Caco-2 (cell line): ENCODE measurements at regions of chr2 and their contacts with region 1.

Region 1: DNA sequence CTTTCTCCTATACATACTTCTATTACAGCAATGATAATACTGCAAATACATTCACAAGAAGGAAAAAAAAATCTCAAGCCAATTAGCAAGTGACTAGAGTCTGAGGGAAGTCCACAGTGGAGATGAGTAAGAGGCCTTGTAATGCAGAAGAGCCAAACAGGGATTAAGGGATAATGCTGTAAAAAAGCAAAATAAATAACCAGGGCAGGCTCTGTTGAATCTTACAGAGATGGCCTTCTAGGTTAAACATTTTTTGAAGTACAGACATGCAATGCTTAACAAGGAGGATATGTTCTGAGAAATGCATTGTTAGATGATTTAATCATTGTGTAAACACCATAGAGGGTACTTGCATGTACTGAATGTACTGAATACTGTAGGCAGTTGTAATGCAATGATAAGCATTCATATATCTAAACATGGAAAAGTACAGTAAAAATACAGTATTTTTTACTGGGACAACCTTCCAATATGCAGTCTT is 122.1 kb upstream of the RMDN2 start:
- DNase-seq: peak in 1 of 2 experiments; percentile 70
- H3K4me3 ChIP-seq: no peak overlapping the region
- H3K4me3 Mint-ChIP-seq: peak overlapping the region; percentile 19
- H3K27ac Mint-ChIP-seq: peak overlapping the region; percentile 77
- H3K4me1 ChIP-seq: peaks cover 47% of the 10 kb centered on the region
- H3K4me1 Mint-ChIP-seq: peaks cover 38% of the 10 kb centered on the region
- H3K27me3 ChIP-seq: no peaks in the 10 kb centered on the region
- H3K27me3 Mint-ChIP-seq: no peaks in the 10 kb centered on the region
- CTCF ChIP-seq: no peak

Region 2: GRCh38 chr2:37059841-37060240 is 743.1 kb before region 1 on chr2:
- CTCF ChIA-PET with region 1: no interaction called
- POLR2A ChIA-PET with region 1: no interaction called
- intact Hi-C with region 1: no loop called
- DNase-seq: no peak
- H3K4me3 ChIP-seq: no peak overlapping the region
- H3K4me3 Mint-ChIP-seq: no peak overlapping the region
- H3K27ac Mint-ChIP-seq: no peak overlapping the region
- H3K4me1 ChIP-seq: no peaks in the 10 kb centered on the region
- H3K4me1 Mint-ChIP-seq: no peaks in the 10 kb centered on the region
- H3K27me3 ChIP-seq: no peaks in the 10 kb centered on the region
- H3K27me3 Mint-ChIP-seq: no peaks in the 10 kb centered on the region
- CTCF ChIP-seq: no peak

Region 3: DNA sequence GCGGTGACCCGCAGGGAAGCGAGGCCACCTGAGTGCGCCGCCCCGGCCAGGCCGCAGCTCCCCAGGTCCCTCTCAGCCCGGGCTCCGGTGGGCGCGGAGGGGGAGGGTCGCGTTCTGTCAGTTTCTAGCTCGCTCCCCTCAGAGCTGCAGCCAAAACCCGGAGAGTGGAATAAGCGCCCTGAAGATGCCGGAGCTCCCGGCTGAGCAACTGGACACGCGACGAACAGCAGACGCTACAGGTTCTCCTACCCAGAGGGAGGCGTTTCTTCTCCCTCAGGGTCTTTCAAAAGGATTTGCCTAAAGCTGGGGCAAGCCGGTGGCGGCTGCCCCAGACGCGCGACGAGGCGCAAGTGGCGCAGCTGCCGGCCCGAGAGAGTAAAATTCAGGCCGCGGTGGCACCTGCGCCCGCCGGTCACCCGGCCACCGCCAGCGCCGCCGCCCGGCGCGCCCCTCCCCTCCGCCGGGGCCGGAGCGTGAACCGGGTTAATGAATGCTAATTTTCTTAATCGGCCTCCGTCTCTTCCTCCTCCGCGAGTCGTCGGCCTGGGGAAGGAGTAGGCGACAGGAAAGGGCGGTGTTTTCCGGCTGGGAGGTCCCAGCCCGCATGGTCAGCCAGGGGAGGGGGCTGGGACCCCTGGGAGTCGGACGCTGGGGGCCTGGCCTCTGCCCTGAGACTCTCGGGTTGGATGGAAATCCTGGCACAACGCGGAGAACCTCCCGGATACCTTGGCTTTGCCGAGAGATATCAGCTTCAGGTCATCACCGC is 130.7 kb before region 1 on chr2:
- CTCF ChIA-PET with region 1: no interaction called
- POLR2A ChIA-PET with region 1: no interaction called
- intact Hi-C with region 1: loop called (anchors 2 kb)
- DNase-seq: peak; percentile 94 to 95
- H3K4me3 ChIP-seq: peak overlapping the region; percentile 98
- H3K4me3 Mint-ChIP-seq: peak overlapping the region; percentile 73
- H3K27ac Mint-ChIP-seq: peak overlapping the region; percentile 20
- H3K4me1 ChIP-seq: peaks cover 47% of the 10 kb centered on the region
- H3K4me1 Mint-ChIP-seq: peaks cover 40% of the 10 kb centered on the region
- H3K27me3 ChIP-seq: no peaks in the 10 kb centered on the region
- H3K27me3 Mint-ChIP-seq: no peaks in the 10 kb centered on the region
- CTCF ChIP-seq: no peak

Region 4: DNA sequence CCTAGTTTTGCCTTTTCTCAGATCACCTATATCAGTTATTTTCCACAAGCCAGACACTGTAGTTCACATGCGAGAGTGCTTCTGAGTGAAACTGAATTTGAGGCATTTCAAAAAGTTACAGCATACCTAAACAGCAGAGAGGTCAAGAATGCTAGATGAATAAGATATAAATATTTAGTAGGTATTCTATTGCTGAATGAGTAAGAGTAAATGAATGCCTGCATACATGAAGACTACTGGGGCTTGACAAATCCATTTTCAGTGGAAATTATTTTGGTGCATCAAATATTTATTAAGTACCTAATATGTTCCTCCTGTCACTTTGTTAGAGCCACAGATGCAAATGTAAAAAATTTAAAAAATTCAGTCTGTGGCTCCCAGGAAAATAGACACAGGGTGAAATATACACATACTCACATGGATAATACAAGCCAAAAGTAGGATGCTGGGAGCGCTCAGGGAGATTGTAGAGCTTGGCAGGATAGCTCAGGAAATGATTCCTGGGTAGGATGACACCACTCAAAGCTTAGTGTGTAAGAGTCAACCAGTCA is 103.9 kb before region 1 on chr2:
- CTCF ChIA-PET with region 1: no interaction called
- POLR2A ChIA-PET with region 1: no interaction called
- intact Hi-C with region 1: no loop called
- DNase-seq: no peak
- H3K4me3 ChIP-seq: no peak overlapping the region
- H3K4me3 Mint-ChIP-seq: no peak overlapping the region
- H3K27ac Mint-ChIP-seq: peak overlapping the region; percentile 1
- H3K4me1 ChIP-seq: peaks cover 11% of the 10 kb centered on the region; the same call in 1 of the 2 replicates
- H3K4me1 Mint-ChIP-seq: peaks cover 16% of the 10 kb centered on the region
- H3K27me3 ChIP-seq: no peaks in the 10 kb centered on the region
- H3K27me3 Mint-ChIP-seq: no peaks in the 10 kb centered on the region
- CTCF ChIP-seq: no peak

Region 5: DNA sequence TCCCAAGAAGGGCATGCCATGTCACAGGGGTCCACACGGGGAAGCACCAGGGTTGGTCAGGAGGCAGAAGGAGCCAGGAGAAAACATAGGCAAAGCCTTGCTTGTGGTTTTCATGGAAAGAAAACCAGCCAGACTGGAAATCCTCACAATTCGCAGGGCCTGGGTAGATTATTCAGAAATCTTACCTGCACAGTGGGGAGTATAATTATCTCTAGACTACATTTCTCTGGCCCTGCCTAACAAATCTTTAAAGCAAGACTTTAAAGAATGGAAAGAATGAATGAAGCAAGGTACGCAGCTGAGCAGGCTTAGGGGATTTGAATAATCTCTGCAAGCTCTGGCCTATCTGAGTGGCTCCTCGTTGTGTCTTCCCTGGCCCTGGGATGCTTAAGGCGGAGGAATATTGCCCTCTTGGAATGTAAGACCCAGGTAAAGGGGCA is 64.6 kb before region 1 on chr2:
- CTCF ChIA-PET with region 1: no interaction called
- POLR2A ChIA-PET with region 1: no interaction called
- intact Hi-C with region 1: loop called (anchors 1 kb)
- DNase-seq: peak; percentile 84 to 90
- H3K4me3 ChIP-seq: no peak overlapping the region
- H3K4me3 Mint-ChIP-seq: peak overlapping the region; percentile 52
- H3K27ac Mint-ChIP-seq: peak overlapping the region; percentile 95
- H3K4me1 ChIP-seq: peaks cover 25% of the 10 kb centered on the region
- H3K4me1 Mint-ChIP-seq: peaks cover 50% of the 10 kb centered on the region
- H3K27me3 ChIP-seq: no peaks in the 10 kb centered on the region
- H3K27me3 Mint-ChIP-seq: no peaks in the 10 kb centered on the region
- CTCF ChIP-seq: no peak

Region 6: GRCh38 chr2:37767956-37768925 is 34.7 kb before region 1 on chr2:
- CTCF ChIA-PET with region 1: no interaction called
- POLR2A ChIA-PET with region 1: no interaction called
- intact Hi-C with region 1: loop called (anchors 1 kb)
- DNase-seq: peak; percentile 60 to 70
- H3K4me3 ChIP-seq: no peak overlapping the region
- H3K4me3 Mint-ChIP-seq: peak overlapping the region; percentile 15
- H3K27ac Mint-ChIP-seq: peak overlapping the region; percentile 43
- H3K4me1 ChIP-seq: peaks cover 40% of the 10 kb centered on the region
- H3K4me1 Mint-ChIP-seq: peaks cover 41% of the 10 kb centered on the region
- H3K27me3 ChIP-seq: no peaks in the 10 kb centered on the region
- H3K27me3 Mint-ChIP-seq: no peaks in the 10 kb centered on the region
- CTCF ChIP-seq: no peak

Region 7: GRCh38 chr2:37973615-37974353 is 170.8 kb after region 1 on chr2:
- CTCF ChIA-PET with region 1: no interaction called
- POLR2A ChIA-PET with region 1: no interaction called
- intact Hi-C with region 1: no loop called
- DNase-seq: no peak
- H3K4me3 ChIP-seq: no peak overlapping the region
- H3K4me3 Mint-ChIP-seq: no peak overlapping the region
- H3K27ac Mint-ChIP-seq: no peak overlapping the region
- H3K4me1 ChIP-seq: no peaks in the 10 kb centered on the region
- H3K4me1 Mint-ChIP-seq: no peaks in the 10 kb centered on the region
- H3K27me3 ChIP-seq: no peaks in the 10 kb centered on the region
- H3K27me3 Mint-ChIP-seq: peaks cover 3% of the 10 kb centered on the region
- CTCF ChIP-seq: no peak